ENCODE measurements at regions of chr14 and their contacts with region 1.

Region 1: DNA sequence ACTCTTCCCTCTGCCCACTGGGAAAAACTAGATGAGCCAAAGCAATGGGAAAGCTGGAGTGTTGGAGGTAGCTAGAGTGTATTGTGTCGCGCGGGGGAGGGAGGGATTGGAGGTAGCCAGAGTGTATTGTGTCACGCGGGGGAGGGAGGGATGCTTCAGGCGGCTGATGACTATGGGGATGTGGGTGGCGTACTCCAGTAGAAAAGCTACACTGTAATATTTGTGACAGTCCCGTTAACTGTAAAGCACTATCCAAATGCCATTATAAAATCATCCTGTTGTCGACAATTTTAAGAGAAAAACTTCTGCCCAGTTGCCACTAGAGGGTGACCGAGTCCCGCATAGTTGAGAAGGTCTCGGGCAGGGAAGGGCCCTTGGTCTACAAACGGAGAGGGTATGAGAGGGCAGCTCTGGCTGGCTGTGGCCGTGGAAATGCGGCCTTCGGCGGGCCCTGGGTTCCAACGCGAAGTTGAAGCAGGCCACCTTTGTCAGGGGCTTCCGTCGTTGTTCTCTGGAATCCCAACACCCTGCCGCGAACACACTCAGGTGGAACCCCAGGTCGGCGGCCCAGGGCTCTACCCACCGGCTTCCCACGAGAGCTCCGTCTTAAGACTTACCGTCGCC is 15.1 kb upstream of the PLEK2 start:
- DNase-seq: peak; percentile 57 to 75
- H3K4me3 ChIP-seq: peak overlapping the region in 1 of 3 donors; percentile 39
- H3K27ac ChIP-seq: no peak overlapping the region
- H3K4me1 ChIP-seq: no peaks in the 10 kb centered on the region
- H3K27me3 ChIP-seq: no peaks in the 10 kb centered on the region
- CTCF ChIP-seq: peak; percentile 80 to 88 (median 83)
- POLR2A ChIP-seq: no peak

Region 2: GRCh38 chr14:67571272-67571850 is 144.3 kb after region 1 on chr14:
- intact Hi-C with region 1: loop called (anchors 10 kb)
- DNase-seq: peak; percentile 40 to 65
- H3K4me3 ChIP-seq: no peak overlapping the region
- H3K27ac ChIP-seq: no peak overlapping the region
- H3K4me1 ChIP-seq: no peaks in the 10 kb centered on the region
- H3K27me3 ChIP-seq: no peaks in the 10 kb centered on the region
- CTCF ChIP-seq: peak; percentile 39 to 85 (median 84)
- POLR2A ChIP-seq: no peak